ENCODE measurements at regions of chr11 and their contacts with region 1.

Region 1: GRCh38 chr11:62108017-62108750 is 15.6 kb upstream of the INCENP start:
- DNase-seq: peak; percentile 40
- H3K4me3 Mint-ChIP-seq: no peak overlapping the region
- H3K27ac Mint-ChIP-seq: no peak overlapping the region
- H3K4me1 Mint-ChIP-seq: peaks cover 18% of the 10 kb centered on the region
- H3K27me3 Mint-ChIP-seq: peaks cover 2% of the 10 kb centered on the region

Region 2: GRCh38 chr11:61871158-61871597 is 237.0 kb before region 1 on chr11:
- CTCF ChIA-PET with region 1: interaction called, 14 read pairs
- POLR2A ChIA-PET with region 1: no interaction called
- DNase-seq: peak; percentile 71
- H3K4me3 Mint-ChIP-seq: no peak overlapping the region
- H3K27ac Mint-ChIP-seq: no peak overlapping the region
- H3K4me1 Mint-ChIP-seq: peaks cover 5% of the 10 kb centered on the region
- H3K27me3 Mint-ChIP-seq: peaks cover 2% of the 10 kb centered on the region

Region 3: DNA sequence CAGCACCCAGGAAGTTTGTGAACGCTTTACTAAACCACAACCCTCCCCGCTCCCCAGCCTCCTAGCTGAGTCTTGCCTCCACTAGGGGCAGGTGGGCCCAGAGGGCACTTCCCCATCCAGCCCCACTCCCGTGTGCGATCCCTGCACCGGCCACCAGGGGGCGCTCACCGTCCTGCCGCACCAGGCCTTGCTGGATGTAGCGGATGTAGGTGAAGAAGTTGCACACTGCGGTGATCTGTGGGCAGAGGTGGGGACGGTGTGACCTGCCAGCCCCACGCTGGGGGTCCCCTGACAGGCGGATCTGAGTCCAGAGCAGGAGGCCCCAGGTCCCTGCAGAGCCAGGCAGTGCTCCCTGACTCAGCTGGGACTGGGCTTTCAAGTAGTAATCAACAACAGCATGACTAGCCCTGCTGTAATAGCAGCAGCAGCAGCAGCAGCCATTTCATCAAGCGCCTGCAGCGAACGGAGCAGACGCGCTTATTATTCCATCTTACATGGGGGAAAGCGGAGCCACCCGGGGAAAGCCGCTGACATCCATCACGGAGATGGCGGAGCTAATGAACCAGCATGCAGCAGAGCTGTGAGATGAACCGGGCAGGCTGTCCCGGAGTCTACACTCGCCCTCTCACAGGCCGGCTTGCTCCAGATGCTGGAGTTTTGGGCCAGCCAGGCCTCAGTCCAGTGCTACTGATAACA is 208.9 kb before region 1 on chr11:
- CTCF ChIA-PET with region 1: interaction called, 144 read pairs
- POLR2A ChIA-PET with region 1: interaction called, 3 read pairs
- DNase-seq: peak; percentile 91
- H3K4me3 Mint-ChIP-seq: no peak overlapping the region
- H3K27ac Mint-ChIP-seq: no peak overlapping the region
- H3K4me1 Mint-ChIP-seq: peaks cover 4% of the 10 kb centered on the region
- H3K27me3 Mint-ChIP-seq: peaks cover 2% of the 10 kb centered on the region

Region 4: DNA sequence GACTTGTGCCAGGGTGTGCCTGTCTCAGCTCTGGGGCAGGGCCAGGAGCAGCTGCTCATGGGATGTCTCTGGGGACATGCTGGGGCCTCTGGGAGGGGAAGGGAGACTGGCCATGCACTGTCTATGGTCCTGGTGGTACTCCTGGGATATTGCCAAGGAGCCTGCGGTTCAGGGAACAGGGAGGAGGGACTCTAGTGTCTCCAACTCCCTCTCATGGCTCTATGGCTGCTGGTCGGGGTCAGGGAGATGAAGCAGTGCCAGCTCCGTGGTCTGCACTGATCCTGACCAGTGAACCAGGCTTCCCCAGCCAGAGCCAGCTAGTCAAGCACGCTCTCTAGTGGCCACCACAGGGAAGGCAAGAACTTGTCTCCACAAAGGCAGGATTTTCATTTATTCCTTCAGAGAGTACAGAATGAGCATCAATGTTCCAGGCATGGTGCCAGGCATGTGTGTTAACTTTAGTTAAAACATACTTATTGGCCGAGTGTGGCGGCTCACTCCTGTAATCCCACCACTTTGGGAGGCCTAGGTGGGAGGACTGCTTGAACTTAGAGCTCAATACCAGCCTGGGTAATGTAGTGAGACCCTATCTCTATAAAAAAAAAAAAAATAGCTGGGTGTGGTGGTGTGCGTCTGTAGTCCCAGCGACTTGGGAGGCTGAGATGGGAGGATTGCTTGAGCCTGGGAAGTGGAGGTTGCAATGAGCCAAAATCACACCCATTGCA is 160.5 kb before region 1 on chr11:
- CTCF ChIA-PET with region 1: interaction called, 32 read pairs
- POLR2A ChIA-PET with region 1: no interaction called
- DNase-seq: peak; percentile 73
- H3K4me3 Mint-ChIP-seq: no peak overlapping the region
- H3K27ac Mint-ChIP-seq: no peak overlapping the region
- H3K4me1 Mint-ChIP-seq: peaks cover 2% of the 10 kb centered on the region
- H3K27me3 Mint-ChIP-seq: peaks cover 5% of the 10 kb centered on the region

Region 5: DNA sequence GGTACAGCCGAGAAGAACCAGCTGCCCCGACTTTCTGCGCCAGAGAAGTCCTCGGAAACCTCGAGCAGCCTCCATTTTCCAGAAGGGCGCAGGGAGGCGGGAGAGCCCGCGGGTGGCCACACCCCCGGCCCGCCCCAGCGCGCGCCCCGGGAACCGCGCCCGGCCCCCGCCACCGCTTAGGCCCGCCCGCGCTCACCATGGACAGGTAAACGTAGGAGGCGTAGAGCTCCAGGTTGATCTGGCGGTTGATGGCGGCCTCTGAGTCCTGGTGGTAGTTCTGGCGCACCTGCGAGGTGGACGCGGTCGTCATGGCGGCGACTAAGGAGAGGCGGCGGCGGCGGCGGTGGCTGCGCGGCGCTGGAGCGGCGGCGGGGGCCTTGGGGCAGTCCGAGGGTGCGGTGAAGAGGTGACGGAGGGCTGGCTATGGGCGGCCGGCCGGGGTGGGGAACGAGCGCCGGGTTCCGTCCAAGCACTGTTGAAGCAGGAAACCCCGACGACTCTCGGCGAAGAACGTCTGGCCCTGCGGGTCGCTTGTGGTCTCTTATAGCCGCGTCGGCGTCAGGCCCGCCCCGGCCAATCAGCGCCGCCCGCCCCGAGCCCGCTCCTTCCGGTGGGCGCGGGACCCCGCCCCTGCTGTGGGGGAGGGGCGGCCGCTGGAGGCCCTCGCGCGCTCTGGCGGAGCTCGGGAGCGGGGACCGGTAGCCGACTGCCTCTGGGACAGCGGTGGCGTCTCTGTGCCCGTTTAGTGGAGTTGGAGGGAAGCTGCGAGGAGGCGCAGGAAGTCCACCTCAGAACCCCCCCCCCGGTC is 140.9 kb before region 1 on chr11 and contains the start of gene FTH1:
- CTCF ChIA-PET with region 1: interaction called, 11 read pairs
- POLR2A ChIA-PET with region 1: interaction called, 4 read pairs
- DNase-seq: peak; percentile 90
- H3K4me3 Mint-ChIP-seq: peak within 1 kb of the TSS; percentile 92
- H3K27ac Mint-ChIP-seq: peak within 1 kb of the TSS; percentile 94
- H3K4me1 Mint-ChIP-seq: peaks cover 67% of the 10 kb centered on the region
- H3K27me3 Mint-ChIP-seq: no peaks in the 10 kb centered on the region
- total RNA-seq, gene FTH1: 1,164 to 1,189 TPM

Region 6: GRCh38 chr11:62088331-62088933 is 19.8 kb before region 1 on chr11:
- CTCF ChIA-PET with region 1: interaction called, 12 read pairs
- POLR2A ChIA-PET with region 1: no interaction called
- DNase-seq: no peak
- H3K4me3 Mint-ChIP-seq: no peak overlapping the region
- H3K27ac Mint-ChIP-seq: no peak overlapping the region
- H3K4me1 Mint-ChIP-seq: no peaks in the 10 kb centered on the region
- H3K27me3 Mint-ChIP-seq: peaks cover 10% of the 10 kb centered on the region

Region 7: GRCh38 chr11:62123669-62124185 is 15.5 kb after region 1 on chr11 and contains the start of gene INCENP:
- CTCF ChIA-PET with region 1: interaction called, 11 read pairs
- POLR2A ChIA-PET with region 1: interaction called, 4 read pairs
- DNase-seq: peak; percentile 96
- H3K4me3 Mint-ChIP-seq: peak within 1 kb of the TSS; percentile 93
- H3K27ac Mint-ChIP-seq: peak within 1 kb of the TSS; percentile 87
- H3K4me1 Mint-ChIP-seq: peaks cover 43% of the 10 kb centered on the region
- H3K27me3 Mint-ChIP-seq: peaks cover 4% of the 10 kb centered on the region
- total RNA-seq, gene INCENP: 156 to 169 TPM